Tibial artery (tissue), 4 donors: ENCODE measurements at regions of chr2 and their contacts with region 1.

Region 1: DNA sequence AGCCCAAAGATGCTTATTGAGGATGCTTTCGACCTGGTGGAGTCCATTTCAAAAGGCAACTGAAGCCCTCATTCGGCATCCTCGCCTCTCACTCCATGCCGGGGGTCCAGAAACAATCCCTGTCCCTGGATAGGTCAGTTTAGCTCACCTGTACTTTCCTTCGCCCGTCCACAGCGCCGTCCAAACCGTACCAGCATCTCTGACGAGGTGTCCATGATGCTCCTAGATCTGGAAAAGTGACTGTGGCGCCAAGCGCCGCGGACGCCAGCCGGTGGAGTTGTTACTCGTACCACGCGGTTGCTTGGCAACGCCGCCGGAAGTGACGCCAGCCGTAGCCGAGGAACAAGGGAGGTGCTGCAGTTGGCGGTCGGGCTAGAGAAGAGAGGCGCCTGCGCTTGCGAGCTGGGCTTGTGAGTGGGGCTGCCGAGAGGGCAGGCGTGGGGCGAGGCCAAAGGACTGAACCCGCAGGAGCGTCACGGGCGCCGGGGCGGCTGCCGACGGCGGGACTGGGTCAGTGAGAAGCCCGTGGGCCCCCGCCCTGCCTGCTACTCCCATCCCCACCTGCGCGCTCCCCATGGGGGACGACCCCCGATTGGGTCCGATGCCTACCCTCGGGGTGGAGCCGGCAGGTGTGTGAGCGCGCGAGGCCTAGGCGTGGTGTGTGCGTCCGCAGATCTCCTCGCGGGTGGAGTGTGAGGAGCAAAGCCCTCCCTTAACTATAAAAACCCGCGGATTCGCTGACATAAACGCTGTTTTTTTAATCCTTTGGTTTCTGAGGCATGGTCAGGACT is at the starts of genes CFAP210 and PHOSPHO2:
- DNase-seq: peak; percentile 99 to 100
- H3K4me3 ChIP-seq: peak within 1 kb of the TSS; percentile 81 to 91
- H3K27ac ChIP-seq: peak within 1 kb of the TSS; percentile 85 to 87
- H3K4me1 ChIP-seq: peaks cover 0 to 13% (median 8%) of the 10 kb centered on the region in 4 donors
- H3K27me3 ChIP-seq: no peaks in the 10 kb centered on the region
- CTCF ChIP-seq: no peak

Region 2: GRCh38 chr2:169732583-169733358 is 38.5 kb after region 1 on chr2:
- intact Hi-C with region 1: loop called (anchors 2 kb)
- DNase-seq: no peak
- H3K4me3 ChIP-seq: peak overlapping the region; percentile 75 to 89
- H3K27ac ChIP-seq: peak overlapping the region; percentile 74
- H3K4me1 ChIP-seq: peaks cover 0 to 41% (median 10%) of the 10 kb centered on the region in 4 donors
- H3K27me3 ChIP-seq: no peaks in the 10 kb centered on the region
- CTCF ChIP-seq: no peak

Region 3: DNA sequence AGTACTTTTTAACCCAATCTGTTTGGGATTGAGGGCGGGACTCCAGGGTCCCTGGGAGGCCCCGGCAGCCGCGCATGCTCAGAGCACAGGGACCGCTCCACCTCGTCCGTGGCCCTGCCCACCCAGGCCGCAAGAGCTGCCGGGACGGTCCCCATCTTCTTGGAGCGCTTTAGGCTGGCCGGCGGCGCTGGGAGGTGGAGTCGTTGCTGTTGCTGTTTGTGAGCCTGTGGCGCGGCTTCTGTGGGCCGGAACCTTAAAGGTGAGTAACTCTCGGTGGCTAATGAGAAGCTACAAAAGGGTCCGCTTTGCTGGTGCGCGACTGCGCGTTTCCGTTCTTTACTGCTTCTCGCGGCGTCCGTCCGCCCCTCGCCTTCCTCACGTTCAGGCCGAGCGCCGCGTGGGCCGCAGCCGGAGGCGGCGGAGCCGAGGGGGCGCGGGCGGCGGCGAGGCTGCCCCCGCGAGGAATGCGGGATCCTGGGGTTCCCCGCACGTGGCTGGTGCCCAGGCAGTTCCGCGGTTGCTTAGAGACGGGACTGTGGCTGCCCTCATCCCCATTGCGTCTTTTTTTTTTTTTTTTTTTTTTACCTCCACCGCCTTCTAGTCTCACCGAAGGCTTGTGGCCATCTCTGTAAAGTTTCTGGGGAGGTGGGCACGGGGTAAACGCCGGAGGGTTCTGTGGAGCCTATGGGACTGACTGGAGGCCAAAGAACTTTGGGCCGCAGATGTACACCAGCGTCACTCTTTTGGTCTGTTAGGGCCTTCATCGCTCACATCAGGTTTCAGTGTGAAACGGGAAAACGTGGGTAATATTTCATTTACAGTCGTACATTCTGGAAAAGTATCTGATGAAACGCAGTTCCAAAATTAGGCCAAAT is 104.6 kb after region 1 on chr2 and contains the start of gene SSB:
- intact Hi-C with region 1: loop called (anchors 10 kb)
- DNase-seq: peak; percentile 90 to 94
- H3K4me3 ChIP-seq: peak within 1 kb of the TSS; percentile 79 to 86
- H3K27ac ChIP-seq: peak within 1 kb of the TSS; percentile 85 to 89
- H3K4me1 ChIP-seq: peaks cover 0 to 32% (median 15%) of the 10 kb centered on the region in 4 donors
- H3K27me3 ChIP-seq: no peaks in the 10 kb centered on the region
- CTCF ChIP-seq: peak in 1 of 2 experiments; percentile 9

Region 4: DNA sequence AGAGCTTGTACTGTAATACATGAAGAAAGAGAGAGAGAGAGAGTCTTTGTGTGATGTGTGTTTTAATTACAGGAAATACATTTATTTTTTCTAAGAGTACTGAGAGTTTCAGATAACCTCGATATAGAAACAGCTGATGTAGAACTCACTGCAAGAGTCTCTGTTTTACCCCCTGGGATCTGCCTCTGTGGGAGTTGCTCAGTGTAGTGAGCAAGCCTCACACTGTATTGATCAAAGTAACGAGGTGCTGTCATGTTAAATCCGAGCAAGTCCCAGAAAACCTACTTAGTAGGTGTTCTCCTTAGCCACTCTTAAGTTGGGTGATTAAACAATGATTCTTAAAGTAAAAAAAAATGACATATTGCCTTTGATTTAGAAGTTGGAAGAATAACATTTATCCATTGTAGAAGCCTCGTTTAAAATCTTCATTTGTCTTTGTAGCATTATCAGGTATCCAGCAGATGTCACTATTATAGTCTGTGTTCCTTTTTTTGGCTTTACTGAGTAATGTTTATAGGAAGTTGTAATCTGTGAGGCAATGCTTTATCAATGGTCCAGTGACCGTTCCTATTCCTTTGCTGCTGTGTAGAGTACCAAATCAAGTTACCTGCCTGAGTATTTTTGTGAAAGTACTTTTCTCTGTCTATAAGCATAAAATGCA is 702.6 kb after region 1 on chr2:
- intact Hi-C with region 1: no loop called
- DNase-seq: no peak
- H3K4me3 ChIP-seq: no peak overlapping the region
- H3K27ac ChIP-seq: no peak overlapping the region
- H3K4me1 ChIP-seq: peaks cover 0 to 14% (median 7%) of the 10 kb centered on the region in 4 donors
- H3K27me3 ChIP-seq: no peaks in the 10 kb centered on the region
- CTCF ChIP-seq: no peak

Region 5: DNA sequence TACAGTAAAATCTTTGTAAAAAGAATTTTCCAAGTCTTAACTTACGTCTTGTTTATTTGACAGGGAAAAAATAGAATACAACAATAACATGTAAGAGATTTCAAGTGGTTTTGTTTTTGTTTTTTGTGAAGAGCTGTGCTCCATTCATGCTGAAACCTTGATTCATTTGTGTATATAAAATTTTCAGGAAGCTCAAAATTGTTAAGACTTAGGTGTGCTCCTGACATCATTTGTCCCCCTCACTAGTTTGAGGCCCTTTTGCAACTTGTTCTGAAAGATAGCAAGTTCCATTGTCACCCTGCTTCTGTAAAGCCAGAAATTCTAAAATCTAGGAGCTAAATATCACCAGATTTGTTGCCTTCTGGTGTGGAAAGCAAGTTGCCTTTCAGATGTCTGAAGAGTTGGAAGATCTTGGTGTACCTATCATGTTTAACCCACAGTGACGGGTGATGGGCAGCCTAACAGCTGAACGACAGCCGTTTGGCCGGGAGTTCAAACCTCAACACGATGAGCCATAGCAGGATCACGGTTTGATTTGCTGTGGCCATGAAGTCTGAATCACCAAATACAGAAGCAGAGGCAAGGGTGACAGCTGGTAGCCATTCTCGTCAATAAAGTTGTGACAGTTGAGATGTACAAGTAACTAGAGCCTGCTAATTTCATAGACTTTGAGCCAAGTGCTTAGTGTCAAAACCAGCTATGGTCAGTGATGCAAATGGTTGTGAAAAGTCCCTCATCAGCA is 815.3 kb after region 1 on chr2:
- intact Hi-C with region 1: no loop called
- DNase-seq: no peak
- H3K4me3 ChIP-seq: no peak overlapping the region
- H3K27ac ChIP-seq: no peak overlapping the region
- H3K4me1 ChIP-seq: peaks cover 0 to 24% (median 14%) of the 10 kb centered on the region in 4 donors
- H3K27me3 ChIP-seq: no peaks in the 10 kb centered on the region
- CTCF ChIP-seq: no peak